A673 (cell line): ENCODE measurements at regions of chr2 and their contacts with region 1.

Region 1: DNA sequence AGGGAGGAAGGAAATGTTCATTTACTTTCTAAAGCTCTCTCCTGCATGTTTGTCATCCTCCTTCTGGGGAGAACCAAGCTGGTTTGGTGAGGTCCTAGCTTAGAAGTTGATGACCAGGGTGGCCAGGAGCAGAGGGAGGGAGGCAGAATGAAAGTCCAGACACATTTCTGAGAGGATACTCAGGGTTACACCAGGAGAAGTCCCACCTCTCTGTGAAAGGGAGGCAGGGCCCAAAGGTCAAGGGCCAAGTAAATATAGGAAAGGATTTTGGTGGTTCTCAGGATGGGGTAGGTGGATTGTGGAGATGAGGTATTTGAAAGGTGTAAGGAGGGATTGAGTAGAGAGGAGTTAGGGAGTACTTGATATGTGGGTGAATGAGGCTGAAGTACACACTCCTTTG is 58.0 kb upstream of the FBXO11 start:
- DNase-seq: no peak
- H3K4me3 ChIP-seq: no peak overlapping the region
- H3K27ac ChIP-seq: no peak overlapping the region
- H3K4me1 ChIP-seq: no peaks in the 10 kb centered on the region
- H3K27me3 ChIP-seq: peaks cover 6% of the 10 kb centered on the region
- CTCF ChIP-seq: no peak

Region 2: GRCh38 chr2:47888581-47889280 is 75.5 kb before region 1 on chr2:
- CTCF ChIA-PET with region 1: no interaction called
- POLR2A ChIA-PET with region 1: no interaction called
- intact Hi-C with region 1: no loop called
- DNase-seq: no peak
- H3K4me3 ChIP-seq: no peak overlapping the region
- H3K27ac ChIP-seq: no peak overlapping the region
- H3K4me1 ChIP-seq: peaks cover 6% of the 10 kb centered on the region
- H3K27me3 ChIP-seq: no peaks in the 10 kb centered on the region
- CTCF ChIP-seq: no peak

Region 3: DNA sequence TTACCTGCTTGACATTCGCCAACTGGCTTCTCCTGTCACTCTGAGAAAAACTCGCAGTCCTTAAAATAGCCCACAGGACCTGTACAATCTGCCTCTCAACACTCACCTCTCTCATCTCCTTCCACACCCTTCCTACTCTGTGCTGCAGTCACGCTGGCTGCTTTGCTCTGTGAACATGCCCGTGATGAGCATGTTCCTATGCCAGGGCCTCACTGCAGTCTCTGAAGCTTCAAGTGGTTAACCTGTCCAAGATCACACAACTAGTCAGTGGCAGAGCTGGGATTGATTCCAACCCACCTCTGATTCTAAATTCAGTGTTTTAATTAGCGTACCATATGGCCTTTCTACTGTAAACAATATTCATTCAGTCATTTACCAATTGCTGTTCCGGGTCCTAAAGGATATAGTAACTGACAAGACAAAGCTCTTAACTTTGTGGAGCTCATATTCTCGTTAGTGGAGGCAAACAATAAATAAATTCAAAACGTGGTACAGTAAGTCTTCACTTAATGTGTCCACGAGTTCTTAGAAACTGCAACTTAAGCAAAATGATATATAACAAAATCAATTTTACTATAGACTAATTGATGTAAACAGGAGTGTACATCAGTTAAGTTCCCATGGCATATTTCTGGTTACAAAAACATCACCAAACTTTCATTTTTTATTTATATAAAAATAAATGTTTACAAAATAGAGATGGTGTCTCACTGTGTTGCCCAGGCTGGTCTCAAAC is 19.1 kb before region 1 on chr2:
- CTCF ChIA-PET with region 1: no interaction called
- POLR2A ChIA-PET with region 1: interaction called, 12 read pairs
- intact Hi-C with region 1: no loop called
- DNase-seq: no peak
- H3K4me3 ChIP-seq: no peak overlapping the region
- H3K27ac ChIP-seq: no peak overlapping the region
- H3K4me1 ChIP-seq: no peaks in the 10 kb centered on the region
- H3K27me3 ChIP-seq: no peaks in the 10 kb centered on the region
- CTCF ChIP-seq: no peak